ENCODE measurements at regions of chr15 and their contacts with region 1.

Region 1: DNA sequence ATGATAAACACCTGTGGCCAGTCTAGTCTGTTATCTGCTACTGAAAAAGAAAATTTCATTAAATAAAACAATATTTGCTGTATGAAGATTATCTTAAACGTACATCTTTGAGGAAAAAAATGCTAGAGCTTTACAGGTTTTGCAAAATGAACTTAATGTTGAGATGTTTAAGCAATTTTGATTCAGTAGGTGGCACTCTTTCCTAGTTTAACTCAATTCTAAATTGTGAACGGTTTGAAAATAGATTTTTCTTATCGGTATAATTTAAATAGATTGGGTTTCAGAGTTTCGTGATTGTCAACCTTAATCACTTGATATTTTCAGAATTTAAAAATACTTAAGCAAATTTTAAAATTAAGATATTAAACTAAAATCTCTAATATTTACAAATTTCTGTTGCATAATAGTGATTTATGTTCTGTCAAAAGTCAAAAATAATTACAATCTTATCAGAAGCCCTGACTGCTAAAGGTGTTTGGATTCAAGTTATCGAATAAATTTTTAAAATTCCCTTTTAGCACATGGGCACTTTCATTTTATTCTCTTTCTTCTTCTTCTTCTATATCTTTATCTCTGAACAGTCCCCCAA is 7.0 kb upstream of the RNF111 start:
- DNase-seq: no peak
- H3K4me3 ChIP-seq: no peak overlapping the region
- H3K27ac ChIP-seq: no peak overlapping the region
- H3K4me1 ChIP-seq: peaks cover 0 to 3% (median 0%) of the 10 kb centered on the region in 4 experiments; a peak in 2 of 7 replicates
- H3K27me3 ChIP-seq: no peaks in the 10 kb centered on the region
- CTCF ChIP-seq: peak in 1 of 3 experiments; percentile 31; a peak in 2 of 4 replicates
- EP300 ChIP-seq: no peak
- POLR2A ChIP-seq: no peak
- RAD21 ChIP-seq: peak in 1 of 2 experiments; percentile 64; a peak in 3 of 4 replicates

Region 2: GRCh38 chr15:58957101-58957973 is 23.1 kb before region 1 on chr15:
- CTCF ChIA-PET with region 1: interaction called, 11 read pairs
- POLR2A ChIA-PET with region 1: interaction called, 3 read pairs
- DNase-seq: peak in 1 of 2 experiments; percentile 71
- H3K4me3 ChIP-seq: no peak overlapping the region
- H3K27ac ChIP-seq: no peak overlapping the region
- H3K4me1 ChIP-seq: peaks cover 0 to 4% (median 0%) of the 10 kb centered on the region in 4 experiments; a peak in 2 of 7 replicates
- H3K27me3 ChIP-seq: no peaks in the 10 kb centered on the region
- CTCF ChIP-seq: peak in 2 of 3 experiments; percentile 87 to 95; a peak in 3 of 4 replicates
- EP300 ChIP-seq: no peak
- POLR2A ChIP-seq: no peak
- RAD21 ChIP-seq: peak; percentile 73 to 80

Region 3: GRCh38 chr15:59099162-59099685 is 118.8 kb after region 1 on chr15:
- CTCF ChIA-PET with region 1: no interaction called
- POLR2A ChIA-PET with region 1: no interaction called
- DNase-seq: no peak
- H3K4me3 ChIP-seq: no peak overlapping the region
- H3K27ac ChIP-seq: no peak overlapping the region
- H3K4me1 ChIP-seq: no peaks in the 10 kb centered on the region
- H3K27me3 ChIP-seq: no peaks in the 10 kb centered on the region
- CTCF ChIP-seq: no peak
- EP300 ChIP-seq: no peak
- POLR2A ChIP-seq: no peak
- RAD21 ChIP-seq: no peak

Measured in H1 (cell line).